ENCODE measurements at regions of chr1 and their contacts with region 1.

Region 1: DNA sequence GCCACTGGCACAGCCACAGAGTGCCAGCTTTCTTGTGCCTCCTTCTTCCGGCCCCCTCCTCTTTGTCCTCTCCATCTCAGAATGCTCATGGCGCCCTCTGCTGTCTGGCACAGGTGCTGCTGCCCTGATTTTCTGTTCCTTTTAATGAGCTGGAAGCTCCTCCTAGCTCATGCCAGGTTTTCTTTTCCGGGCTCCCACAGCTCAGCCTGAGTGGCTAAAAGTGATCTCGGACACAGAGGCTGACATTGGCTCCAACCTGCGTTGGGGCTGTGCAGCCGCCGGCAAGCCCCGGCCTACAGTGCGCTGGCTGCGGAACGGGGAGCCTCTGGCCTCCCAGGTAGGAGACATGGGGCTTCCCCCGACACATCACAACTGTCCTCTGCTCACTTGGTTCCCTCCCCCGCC is 18.7 kb downstream of the CNTN2 start:
- DNase-seq: peak; percentile 83
- ATAC-seq: peak; percentile 86
- H3K4me3 Mint-ChIP-seq: no peak overlapping the region
- H3K27ac Mint-ChIP-seq: no peak overlapping the region
- H3K4me1 Mint-ChIP-seq: no peaks in the 10 kb centered on the region
- H3K27me3 Mint-ChIP-seq: no peaks in the 10 kb centered on the region
- CTCF ChIP-seq: peak; percentile 89

Region 2: DNA sequence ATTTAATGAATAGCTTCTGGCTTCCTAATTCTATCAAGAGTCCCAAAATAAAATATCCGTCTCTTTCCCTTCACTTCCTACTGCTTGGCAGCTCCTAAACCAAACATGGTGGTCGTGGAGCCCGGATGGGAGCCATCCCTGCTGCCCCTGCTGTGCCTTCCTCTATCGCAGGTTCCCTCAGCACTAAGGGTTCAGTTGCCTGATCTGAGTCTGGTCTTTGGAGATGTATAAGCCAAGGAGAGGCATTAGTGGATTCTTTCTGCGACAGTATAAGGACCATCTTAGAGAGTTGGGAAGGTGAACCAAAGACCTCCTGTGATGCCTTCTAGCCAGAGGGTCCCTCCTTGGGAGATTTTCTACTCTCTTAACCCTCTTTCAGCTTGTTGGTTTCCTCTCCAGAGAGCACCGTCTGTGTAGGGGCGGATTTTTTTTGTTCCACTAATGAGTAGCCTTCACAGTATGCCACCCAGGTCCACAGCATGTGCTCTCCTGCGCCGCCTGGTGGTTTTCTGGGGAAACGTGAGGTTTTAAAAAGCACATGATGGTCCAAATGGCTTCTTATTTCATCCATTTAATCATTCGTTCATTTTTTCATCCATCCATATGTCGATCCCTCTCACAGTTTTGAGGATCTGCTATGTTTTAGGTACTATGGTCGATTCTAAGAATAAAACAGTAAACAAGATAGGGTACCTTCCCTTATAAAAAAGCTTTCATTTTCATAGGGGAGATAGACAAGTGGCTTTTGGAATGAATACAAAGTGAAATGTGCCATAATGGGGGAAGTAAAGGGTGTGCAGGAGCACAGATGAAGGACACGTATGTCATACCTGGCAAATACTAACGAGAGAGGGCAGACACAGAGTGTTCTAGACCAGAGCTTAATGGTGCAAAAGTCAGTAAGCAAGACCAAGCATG is 120.0 kb before region 1 on chr1:
- CTCF ChIA-PET with region 1: interaction called, 26 read pairs
- POLR2A ChIA-PET with region 1: no interaction called
- intact Hi-C with region 1: no loop called
- DNase-seq: peak; percentile 77
- ATAC-seq: peak; percentile 79
- H3K4me3 Mint-ChIP-seq: no peak overlapping the region
- H3K27ac Mint-ChIP-seq: no peak overlapping the region
- H3K4me1 Mint-ChIP-seq: no peaks in the 10 kb centered on the region
- H3K27me3 Mint-ChIP-seq: peaks cover 3% of the 10 kb centered on the region
- CTCF ChIP-seq: peak; percentile 89

Region 3: GRCh38 chr1:204980840-204981405 is 80.7 kb before region 1 on chr1:
- CTCF ChIA-PET with region 1: interaction called, 71 read pairs
- POLR2A ChIA-PET with region 1: interaction called, 4 read pairs
- intact Hi-C with region 1: loop called (anchors 5 kb)
- DNase-seq: no peak
- ATAC-seq: no peak
- H3K4me3 Mint-ChIP-seq: no peak overlapping the region
- H3K27ac Mint-ChIP-seq: no peak overlapping the region
- H3K4me1 Mint-ChIP-seq: peaks cover 2% of the 10 kb centered on the region
- H3K27me3 Mint-ChIP-seq: peaks cover 9% of the 10 kb centered on the region
- CTCF ChIP-seq: no peak

Region 4: DNA sequence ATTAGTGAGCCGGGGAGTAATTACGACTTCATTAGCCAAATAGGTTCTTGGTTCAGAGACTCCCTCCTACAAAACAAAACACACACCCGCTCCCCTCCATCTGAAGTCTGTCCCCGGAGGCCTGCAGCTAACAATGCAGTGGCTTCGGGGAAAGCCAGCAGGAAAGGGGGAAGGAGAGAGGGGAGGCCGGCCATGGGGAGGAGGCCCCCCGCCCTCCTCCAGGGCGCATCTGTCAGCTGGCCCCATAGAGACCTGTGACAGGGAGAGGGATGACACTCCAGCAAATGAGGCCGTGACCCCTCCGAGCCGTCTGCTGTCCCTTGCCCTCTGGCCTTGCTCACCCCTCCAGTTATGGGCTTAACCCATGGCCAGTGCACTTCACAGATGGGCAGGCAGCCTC is 30.8 kb before region 1 on chr1:
- CTCF ChIA-PET with region 1: interaction called, 15 read pairs
- POLR2A ChIA-PET with region 1: no interaction called
- intact Hi-C with region 1: no loop called
- DNase-seq: no peak
- ATAC-seq: no peak
- H3K4me3 Mint-ChIP-seq: no peak overlapping the region
- H3K27ac Mint-ChIP-seq: no peak overlapping the region
- H3K4me1 Mint-ChIP-seq: no peaks in the 10 kb centered on the region
- H3K27me3 Mint-ChIP-seq: no peaks in the 10 kb centered on the region
- CTCF ChIP-seq: no peak

Region 5: DNA sequence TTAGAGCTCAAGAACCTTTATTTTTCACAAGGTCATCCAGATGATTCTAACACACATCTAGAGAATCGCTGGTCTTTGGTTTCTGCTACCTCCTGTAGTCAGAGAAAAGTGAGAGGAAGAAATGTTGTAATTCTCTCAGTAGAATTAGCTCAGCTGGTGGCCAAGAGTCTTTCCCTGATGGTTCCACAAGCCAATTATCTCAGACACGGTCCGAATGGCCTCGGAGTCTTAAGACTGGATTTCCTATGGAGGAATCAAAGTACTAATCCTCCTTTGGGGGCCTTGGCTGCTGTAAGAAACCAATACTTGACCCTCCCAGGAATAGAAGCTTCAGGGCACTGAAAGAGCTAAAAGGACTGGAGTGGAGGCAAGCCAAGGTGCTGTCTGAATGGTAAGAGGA is 20.8 kb after region 1 on chr1:
- CTCF ChIA-PET with region 1: interaction called, 35 read pairs
- POLR2A ChIA-PET with region 1: no interaction called
- intact Hi-C with region 1: no loop called
- DNase-seq: no peak
- ATAC-seq: no peak
- H3K4me3 Mint-ChIP-seq: no peak overlapping the region
- H3K27ac Mint-ChIP-seq: no peak overlapping the region
- H3K4me1 Mint-ChIP-seq: no peaks in the 10 kb centered on the region
- H3K27me3 Mint-ChIP-seq: no peaks in the 10 kb centered on the region
- CTCF ChIP-seq: no peak

Region 6: GRCh38 chr1:205141236-205142101 is 79.8 kb after region 1 on chr1:
- CTCF ChIA-PET with region 1: interaction called, 10 read pairs
- POLR2A ChIA-PET with region 1: no interaction called
- intact Hi-C with region 1: no loop called
- DNase-seq: peak; percentile 92
- ATAC-seq: peak; percentile 94
- H3K4me3 Mint-ChIP-seq: no peak overlapping the region
- H3K27ac Mint-ChIP-seq: no peak overlapping the region
- H3K4me1 Mint-ChIP-seq: peaks cover 5% of the 10 kb centered on the region
- H3K27me3 Mint-ChIP-seq: no peaks in the 10 kb centered on the region
- CTCF ChIP-seq: peak; percentile 79

Measured in activated CD8-positive, alpha-beta T cell treated with anti-CD3 and anti-CD28 coated beads for 36 hours (primary cell).